ENCODE measurements at regions of chr20 and their contacts with region 1.

Region 1: DNA sequence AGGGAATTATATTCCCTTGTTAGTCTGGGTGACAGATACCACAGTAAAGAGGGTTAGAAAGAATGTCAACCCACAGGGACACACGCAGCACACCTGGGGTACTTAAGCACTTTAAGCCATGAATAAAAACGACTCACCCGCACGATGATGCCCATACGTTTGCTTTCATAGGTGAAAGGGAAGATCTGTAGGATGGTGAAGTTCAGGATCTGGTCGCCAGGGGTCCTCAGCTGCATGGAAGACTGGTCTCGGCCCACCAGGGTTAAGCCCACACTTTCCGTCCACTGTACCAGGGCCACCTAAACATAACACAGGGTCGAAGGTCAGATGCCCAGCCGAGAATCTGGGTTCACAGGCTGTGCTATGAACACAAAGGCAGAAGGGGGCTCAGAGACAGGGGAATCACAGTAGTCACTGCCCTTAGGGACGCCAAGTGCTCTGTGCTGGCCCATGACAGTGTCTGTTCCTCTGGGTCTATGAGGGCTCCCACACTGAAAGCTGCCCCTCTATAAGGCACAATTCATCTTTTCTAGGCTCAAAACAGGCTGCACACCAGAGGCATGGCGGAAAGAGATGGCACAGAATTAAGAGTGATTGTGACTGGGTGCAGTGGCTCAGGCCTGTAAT is 96.8 kb upstream of the NFATC2 start:
- DNase-seq: peak; percentile 84
- H3K4me3 ChIP-seq: no peak overlapping the region
- H3K27ac ChIP-seq: no peak overlapping the region
- H3K4me1 ChIP-seq: peaks cover 3% of the 10 kb centered on the region
- H3K27me3 ChIP-seq: no peaks in the 10 kb centered on the region
- CTCF ChIP-seq: peak; percentile 83 to 88
- POLR2A ChIP-seq: no peak

Region 2: GRCh38 chr20:51616060-51616459 is 23.3 kb before region 1 on chr20:
- CTCF ChIA-PET with region 1: no interaction called
- POLR2A ChIA-PET with region 1: no interaction called
- dilution Hi-C with region 1: no loop called
- intact Hi-C with region 1: no loop called
- DNase-seq: no peak
- H3K4me3 ChIP-seq: no peak overlapping the region
- H3K27ac ChIP-seq: no peak overlapping the region
- H3K4me1 ChIP-seq: no peaks in the 10 kb centered on the region
- H3K27me3 ChIP-seq: no peaks in the 10 kb centered on the region
- CTCF ChIP-seq: no peak
- POLR2A ChIP-seq: no peak

Region 3: GRCh38 chr20:52083627-52084232 is 444.4 kb after region 1 on chr20:
- CTCF ChIA-PET with region 1: interaction called, 13 read pairs
- POLR2A ChIA-PET with region 1: no interaction called
- dilution Hi-C with region 1: no loop called
- intact Hi-C with region 1: loop called (anchors 1 kb)
- DNase-seq: peak; percentile 75
- H3K4me3 ChIP-seq: no peak overlapping the region
- H3K27ac ChIP-seq: no peak overlapping the region
- H3K4me1 ChIP-seq: no peaks in the 10 kb centered on the region
- H3K27me3 ChIP-seq: no peaks in the 10 kb centered on the region
- CTCF ChIP-seq: peak; percentile 51 to 56
- POLR2A ChIP-seq: no peak

Region 4: GRCh38 chr20:52150440-52151258 is 511.3 kb after region 1 on chr20:
- CTCF ChIA-PET with region 1: no interaction called
- POLR2A ChIA-PET with region 1: no interaction called
- dilution Hi-C with region 1: no loop called
- intact Hi-C with region 1: loop called (anchors 1 kb)
- DNase-seq: peak; percentile 72
- H3K4me3 ChIP-seq: no peak overlapping the region
- H3K27ac ChIP-seq: no peak overlapping the region
- H3K4me1 ChIP-seq: no peaks in the 10 kb centered on the region
- H3K27me3 ChIP-seq: no peaks in the 10 kb centered on the region
- CTCF ChIP-seq: peak; percentile 61 to 73
- POLR2A ChIP-seq: no peak

Measured in endothelial cell of umbilical vein (primary cell).